PC-9 (cell line): ENCODE measurements at regions of chr1 and their contacts with region 1.

Region 1: DNA sequence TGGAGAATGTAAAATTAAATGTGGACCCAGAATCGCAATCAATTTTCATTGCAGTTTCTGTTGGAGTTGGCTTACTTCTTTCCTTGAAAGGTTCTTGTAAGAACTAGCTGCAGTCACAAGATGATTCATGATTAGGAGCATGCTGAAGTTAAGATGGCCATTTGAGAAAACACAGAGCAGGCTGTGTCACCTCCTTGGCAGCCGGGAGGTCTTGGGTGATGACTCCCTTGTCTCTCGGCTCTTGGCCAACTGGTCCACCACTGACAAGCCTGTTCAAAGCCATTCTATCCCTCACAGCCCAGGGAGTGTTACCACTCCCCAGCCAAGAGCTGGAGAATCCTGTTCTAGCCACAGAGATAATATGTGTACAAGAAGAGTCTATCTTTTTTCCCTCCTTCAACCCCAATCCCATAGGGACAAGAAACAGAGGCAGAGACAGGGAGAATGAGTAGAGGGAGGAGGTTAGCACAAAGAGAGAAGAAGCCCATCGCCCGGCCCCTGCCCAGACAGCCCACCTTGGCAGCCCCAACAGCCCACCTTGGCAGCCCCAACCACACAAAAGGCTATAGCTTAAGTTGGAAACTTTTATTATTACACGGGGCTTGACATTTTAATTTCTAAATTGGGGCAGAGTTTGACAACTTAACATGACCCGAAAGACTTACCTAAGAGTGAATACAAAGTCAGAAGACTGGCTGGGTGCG is 40.7 kb downstream of the OPTC start:
- DNase-seq: peak; percentile 81 to 95
- H3K4me3 ChIP-seq: no peak overlapping the region
- H3K27ac ChIP-seq: peak overlapping the region; percentile 93
- H3K4me1 ChIP-seq: peaks cover 74% of the 10 kb centered on the region
- H3K27me3 ChIP-seq: no peaks in the 10 kb centered on the region
- CTCF ChIP-seq: no peak

Region 2: GRCh38 chr1:203558064-203558760 is 23.5 kb after region 1 on chr1:
- CTCF ChIA-PET with region 1: interaction called, 3 read pairs
- POLR2A ChIA-PET with region 1: no interaction called
- intact Hi-C with region 1: loop called (anchors 1 kb)
- DNase-seq: peak; percentile 59 to 99
- H3K4me3 ChIP-seq: no peak overlapping the region
- H3K27ac ChIP-seq: peak overlapping the region; percentile 76
- H3K4me1 ChIP-seq: peaks cover 59% of the 10 kb centered on the region
- H3K27me3 ChIP-seq: no peaks in the 10 kb centered on the region
- CTCF ChIP-seq: no peak